Activated CD4-positive, alpha-beta T cell treated with anti-CD3 and anti-CD28 coated beads for 36 hours (primary cell): ENCODE measurements at regions of chr2 and their contacts with region 1.

Region 1: DNA sequence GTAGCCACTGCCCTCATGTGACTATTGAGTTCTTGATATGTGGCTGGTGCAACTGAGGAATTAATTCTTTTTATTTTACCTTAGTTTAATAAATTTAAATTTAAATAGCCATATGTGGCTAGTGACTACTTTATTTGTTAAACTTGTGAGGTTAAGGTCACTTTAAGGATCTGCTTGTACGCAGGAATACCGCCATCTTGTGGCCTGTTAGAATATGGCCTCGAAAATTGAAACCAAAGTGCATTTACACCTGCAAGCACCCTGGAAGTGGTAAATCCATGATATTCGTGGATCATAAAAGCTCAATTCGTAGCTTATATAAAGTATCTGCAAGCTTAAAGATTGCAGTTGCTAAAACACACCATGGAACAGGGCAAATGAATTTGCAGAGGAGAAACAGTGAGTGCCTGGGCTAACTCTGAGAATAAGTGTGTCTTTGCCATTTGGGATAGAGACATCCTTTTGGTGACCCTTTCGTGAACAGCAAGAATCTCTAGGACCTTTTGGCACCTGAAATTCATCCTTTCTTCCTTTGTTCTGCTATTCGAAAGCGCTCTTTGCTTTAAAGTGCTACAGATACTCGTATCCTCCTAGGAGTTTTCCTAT is 59.9 kb upstream of the REG3A start:
- DNase-seq: peak; percentile 46
- ATAC-seq: no peak
- H3K4me3 Mint-ChIP-seq: no peak overlapping the region
- H3K27ac Mint-ChIP-seq: no peak overlapping the region
- H3K4me1 Mint-ChIP-seq: no peaks in the 10 kb centered on the region
- H3K27me3 Mint-ChIP-seq: no peaks in the 10 kb centered on the region

Region 2: GRCh38 chr2:79887747-79888374 is 668.4 kb after region 1 on chr2:
- CTCF ChIA-PET with region 1: no interaction called
- POLR2A ChIA-PET with region 1: no interaction called
- intact Hi-C with region 1: loop called in 1 of 2 experiments (anchors 5 kb)
- DNase-seq: peak; percentile 43
- ATAC-seq: no peak
- H3K4me3 Mint-ChIP-seq: no peak overlapping the region
- H3K27ac Mint-ChIP-seq: no peak overlapping the region
- H3K4me1 Mint-ChIP-seq: no peaks in the 10 kb centered on the region
- H3K27me3 Mint-ChIP-seq: peaks cover 7% of the 10 kb centered on the region